MCF 10A (cell line): ENCODE measurements at regions of chr1 and their contacts with region 1.

Region 1: GRCh38 chr1:40951943-40952743 is 27.4 kb upstream of the CTPS1 start:
- DNase-seq: peak; percentile 75
- H3K4me3 Mint-ChIP-seq: no peak overlapping the region
- H3K27ac Mint-ChIP-seq: no peak overlapping the region
- H3K4me1 Mint-ChIP-seq: peaks cover 8% of the 10 kb centered on the region
- H3K27me3 Mint-ChIP-seq: no peaks in the 10 kb centered on the region
- CTCF ChIP-seq: peak; percentile 96

Region 2: DNA sequence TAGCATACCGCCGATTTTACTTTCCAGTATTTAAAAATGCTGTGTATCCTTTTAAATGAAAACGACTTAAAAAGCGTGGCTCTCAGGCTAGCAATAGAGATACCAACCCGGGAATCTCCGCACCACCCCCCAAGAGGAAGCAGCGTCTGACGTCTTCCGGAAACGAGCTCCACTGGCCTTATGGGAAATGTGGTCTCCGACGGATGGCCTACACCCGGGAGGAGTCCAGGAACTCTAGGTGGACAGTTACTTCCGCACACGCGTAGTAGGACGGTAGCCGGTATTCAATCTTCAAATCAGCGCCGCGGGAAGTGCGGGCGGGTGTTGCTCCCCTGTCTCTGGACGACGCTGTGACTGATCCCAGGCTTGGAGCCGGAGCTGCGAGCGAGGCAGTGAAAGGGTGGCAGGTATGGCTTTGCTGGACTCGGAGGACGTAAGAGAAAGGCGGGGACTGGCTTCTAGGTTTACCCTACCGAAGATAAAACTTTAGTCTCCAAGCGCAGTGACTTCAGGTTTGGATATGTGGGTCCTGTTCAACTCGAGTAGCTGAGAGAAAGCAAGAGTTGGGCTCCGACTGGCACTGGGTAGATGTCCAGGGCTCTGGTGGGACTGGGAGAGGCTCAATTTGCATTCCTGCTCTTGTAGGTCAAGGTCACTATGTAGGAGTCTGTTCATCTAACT is 420.6 kb before region 1 on chr1 and contains the start of gene ZNF684:
- CTCF ChIA-PET with region 1: interaction called, 4 read pairs
- POLR2A ChIA-PET with region 1: no interaction called
- intact Hi-C with region 1: loop called (anchors 2 kb)
- DNase-seq: peak; percentile 95
- H3K4me3 Mint-ChIP-seq: peak within 1 kb of the TSS; percentile 97
- H3K27ac Mint-ChIP-seq: peak within 1 kb of the TSS; percentile 85
- H3K4me1 Mint-ChIP-seq: peaks cover 23% of the 10 kb centered on the region
- H3K27me3 Mint-ChIP-seq: no peaks in the 10 kb centered on the region
- CTCF ChIP-seq: no peak
- total RNA-seq, gene ZNF684: 1.4 and 1.8 TPM in 2 replicates

Region 3: DNA sequence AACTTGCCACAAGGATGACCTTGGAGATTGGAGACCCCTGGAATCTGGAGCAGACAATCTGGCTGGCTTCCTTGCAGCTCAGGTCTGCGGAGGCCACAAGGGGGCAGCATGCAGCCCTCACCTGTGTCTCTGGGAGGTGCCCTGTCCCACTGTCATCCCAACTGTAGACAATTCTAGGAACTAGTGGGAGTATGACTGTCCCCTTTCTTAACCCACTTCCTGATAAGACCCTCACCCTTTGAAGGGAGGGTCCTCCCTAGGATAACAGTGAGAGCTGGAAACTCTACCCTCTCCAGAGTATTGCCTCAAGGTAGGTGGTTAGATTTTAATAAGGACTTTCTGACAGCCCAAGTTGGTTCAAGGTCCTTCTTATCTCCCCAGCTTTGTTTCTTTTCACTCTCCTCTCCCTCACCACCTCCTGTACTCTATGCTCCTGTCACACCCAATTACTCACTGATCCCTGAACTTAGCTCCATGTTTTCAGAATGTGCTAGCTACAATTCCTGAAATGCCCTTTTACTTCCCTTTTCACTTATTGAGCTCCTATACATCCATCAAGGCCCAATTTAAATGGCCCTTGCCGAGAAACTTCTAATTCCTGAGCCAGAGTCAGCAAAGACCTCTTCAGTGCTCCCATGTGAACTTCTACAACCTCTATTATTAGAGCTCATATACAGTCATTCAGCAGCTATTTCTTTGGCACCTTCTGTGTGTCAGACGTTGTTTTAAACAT is 177.7 kb before region 1 on chr1:
- CTCF ChIA-PET with region 1: interaction called, 30 read pairs
- POLR2A ChIA-PET with region 1: interaction called, 5 read pairs
- intact Hi-C with region 1: loop called (anchors 1 kb)
- DNase-seq: peak; percentile 52
- H3K4me3 Mint-ChIP-seq: no peak overlapping the region
- H3K27ac Mint-ChIP-seq: no peak overlapping the region
- H3K4me1 Mint-ChIP-seq: peaks cover 6% of the 10 kb centered on the region
- H3K27me3 Mint-ChIP-seq: no peaks in the 10 kb centered on the region
- CTCF ChIP-seq: peak; percentile 79

Region 4: DNA sequence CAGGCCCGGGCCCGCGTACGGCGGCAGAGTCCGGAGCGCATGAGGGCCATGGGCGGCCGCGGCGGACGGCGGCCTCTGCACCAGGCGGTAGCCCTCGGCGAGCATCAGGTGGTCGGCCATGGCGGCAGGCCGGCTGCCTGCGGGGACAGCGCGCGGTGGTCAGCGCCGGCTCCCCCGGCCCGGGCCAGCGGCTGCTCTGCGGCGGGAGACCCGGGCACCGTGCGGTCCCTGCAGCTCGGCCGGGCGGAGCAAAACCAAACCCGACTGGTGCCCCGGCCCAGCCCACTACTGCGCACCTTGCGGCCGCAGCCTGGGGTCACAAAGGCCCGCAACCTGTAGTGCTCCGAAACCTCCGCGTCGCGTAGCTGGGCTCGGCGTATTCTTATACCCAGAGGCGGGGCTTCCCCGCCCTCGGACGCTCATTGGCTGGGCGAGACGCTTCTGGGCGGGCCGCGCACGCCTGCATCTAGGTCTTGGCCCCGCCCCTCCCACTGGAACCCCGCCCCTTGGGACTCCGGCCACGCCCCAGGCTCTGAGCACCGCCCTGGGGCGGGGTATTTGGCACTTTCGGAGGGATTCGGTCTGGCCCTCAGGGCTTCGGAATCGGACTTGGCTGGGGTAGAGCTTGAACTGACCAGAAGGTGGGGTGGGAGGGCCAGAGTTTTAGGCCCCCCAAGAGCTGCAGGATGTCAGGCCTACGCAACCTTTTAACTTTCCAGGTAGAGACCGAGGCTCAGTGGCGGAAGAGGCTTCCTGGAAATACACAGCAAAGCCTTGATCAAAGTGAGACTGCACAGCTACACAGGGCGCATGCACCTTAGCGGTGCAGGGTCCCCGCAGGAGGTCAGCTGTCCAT is 89.9 kb before region 1 on chr1 and contains the start of gene CITED4:
- CTCF ChIA-PET with region 1: interaction called, 609 read pairs
- POLR2A ChIA-PET with region 1: interaction called, 13 read pairs
- intact Hi-C with region 1: loop called (anchors 1 kb)
- DNase-seq: peak; percentile 96
- H3K4me3 Mint-ChIP-seq: peak within 1 kb of the TSS; percentile 88
- H3K27ac Mint-ChIP-seq: peak within 1 kb of the TSS; percentile 88
- H3K4me1 Mint-ChIP-seq: peaks cover 30% of the 10 kb centered on the region
- H3K27me3 Mint-ChIP-seq: no peaks in the 10 kb centered on the region
- CTCF ChIP-seq: peak; percentile 25
- total RNA-seq, gene CITED4: 22.5 and 43.5 TPM in 2 replicates

Region 5: DNA sequence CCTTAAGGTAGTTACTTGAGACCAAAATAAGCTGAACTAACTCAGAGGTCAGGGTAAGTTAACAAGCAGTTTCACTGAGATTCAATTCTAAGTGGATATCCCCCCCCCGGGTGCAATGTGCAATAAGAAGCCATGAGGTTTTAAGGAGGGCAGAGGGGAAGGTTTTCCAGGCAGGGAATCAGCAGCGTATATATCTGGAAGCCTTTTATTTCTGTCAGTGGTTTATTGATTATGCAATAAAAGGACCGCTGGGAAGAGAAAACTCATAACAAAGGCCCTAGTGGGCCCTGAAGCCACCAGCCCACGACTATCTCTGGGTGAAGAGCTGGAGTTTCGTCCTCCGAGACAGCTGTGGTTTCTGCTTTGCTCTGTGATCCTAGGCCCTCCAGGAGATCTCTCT is 25.7 kb before region 1 on chr1:
- CTCF ChIA-PET with region 1: interaction called, 15 read pairs
- POLR2A ChIA-PET with region 1: no interaction called
- intact Hi-C with region 1: no loop called
- DNase-seq: no peak
- H3K4me3 Mint-ChIP-seq: no peak overlapping the region
- H3K27ac Mint-ChIP-seq: no peak overlapping the region
- H3K4me1 Mint-ChIP-seq: no peaks in the 10 kb centered on the region
- H3K27me3 Mint-ChIP-seq: no peaks in the 10 kb centered on the region
- CTCF ChIP-seq: no peak

Region 6: GRCh38 chr1:40986956-40987355 is 34.8 kb after region 1 on chr1:
- CTCF ChIA-PET with region 1: interaction called, 11 read pairs
- POLR2A ChIA-PET with region 1: no interaction called
- intact Hi-C with region 1: no loop called
- DNase-seq: no peak
- H3K4me3 Mint-ChIP-seq: no peak overlapping the region
- H3K27ac Mint-ChIP-seq: no peak overlapping the region
- H3K4me1 Mint-ChIP-seq: peaks cover 11% of the 10 kb centered on the region
- H3K27me3 Mint-ChIP-seq: no peaks in the 10 kb centered on the region
- CTCF ChIP-seq: no peak

Region 7: DNA sequence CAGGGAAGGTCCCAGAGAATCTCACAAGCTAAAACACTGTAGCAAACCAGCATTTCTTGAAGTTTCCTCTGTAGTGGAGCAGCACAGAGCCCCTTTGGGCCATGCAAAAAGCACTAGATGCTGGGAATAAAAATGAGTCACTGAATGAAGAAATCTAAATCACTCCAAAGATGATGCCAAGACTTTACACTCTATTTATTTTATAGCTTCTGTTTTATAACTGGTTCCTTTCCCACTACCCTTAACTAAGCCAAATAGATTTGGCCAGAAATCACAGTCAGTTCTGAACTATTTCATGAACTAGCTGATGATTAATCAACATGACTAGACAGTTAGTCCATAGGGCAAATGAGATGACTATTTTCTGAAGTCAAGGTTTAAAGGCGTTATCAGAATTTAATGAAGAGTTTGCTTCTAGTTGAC is 200.5 kb after region 1 on chr1:
- CTCF ChIA-PET with region 1: no interaction called
- POLR2A ChIA-PET with region 1: no interaction called
- intact Hi-C with region 1: no loop called
- DNase-seq: peak; percentile 90
- H3K4me3 Mint-ChIP-seq: no peak overlapping the region
- H3K27ac Mint-ChIP-seq: peak overlapping the region; percentile 92
- H3K4me1 Mint-ChIP-seq: peaks cover 21% of the 10 kb centered on the region
- H3K27me3 Mint-ChIP-seq: no peaks in the 10 kb centered on the region
- CTCF ChIP-seq: no peak

Region 8: GRCh38 chr1:41175546-41175945 is 223.4 kb after region 1 on chr1:
- CTCF ChIA-PET with region 1: no interaction called
- POLR2A ChIA-PET with region 1: no interaction called
- intact Hi-C with region 1: no loop called
- DNase-seq: peak; percentile 4
- H3K4me3 Mint-ChIP-seq: no peak overlapping the region
- H3K27ac Mint-ChIP-seq: peak overlapping the region; percentile 59
- H3K4me1 Mint-ChIP-seq: peaks cover 16% of the 10 kb centered on the region
- H3K27me3 Mint-ChIP-seq: no peaks in the 10 kb centered on the region
- CTCF ChIP-seq: no peak